Sigmoid colon (tissue), 7 donors: ENCODE measurements at regions of chr3 and their contacts with region 1.

Region 1: GRCh38 chr3:112531358-112531781 is 30.4 kb downstream of the ATG3 start:
- DNase-seq: no peak
- H3K4me3 ChIP-seq: no peak overlapping the region
- H3K27ac ChIP-seq: no peak overlapping the region
- H3K4me1 ChIP-seq: no peaks in the 10 kb centered on the region
- H3K27me3 ChIP-seq: no peaks in the 10 kb centered on the region
- CTCF ChIP-seq: peak in 3 of 4 experiments; percentile 18 to 54 (median 53)
- EP300 ChIP-seq: no peak
- POLR2A ChIP-seq: no peak

Region 2: DNA sequence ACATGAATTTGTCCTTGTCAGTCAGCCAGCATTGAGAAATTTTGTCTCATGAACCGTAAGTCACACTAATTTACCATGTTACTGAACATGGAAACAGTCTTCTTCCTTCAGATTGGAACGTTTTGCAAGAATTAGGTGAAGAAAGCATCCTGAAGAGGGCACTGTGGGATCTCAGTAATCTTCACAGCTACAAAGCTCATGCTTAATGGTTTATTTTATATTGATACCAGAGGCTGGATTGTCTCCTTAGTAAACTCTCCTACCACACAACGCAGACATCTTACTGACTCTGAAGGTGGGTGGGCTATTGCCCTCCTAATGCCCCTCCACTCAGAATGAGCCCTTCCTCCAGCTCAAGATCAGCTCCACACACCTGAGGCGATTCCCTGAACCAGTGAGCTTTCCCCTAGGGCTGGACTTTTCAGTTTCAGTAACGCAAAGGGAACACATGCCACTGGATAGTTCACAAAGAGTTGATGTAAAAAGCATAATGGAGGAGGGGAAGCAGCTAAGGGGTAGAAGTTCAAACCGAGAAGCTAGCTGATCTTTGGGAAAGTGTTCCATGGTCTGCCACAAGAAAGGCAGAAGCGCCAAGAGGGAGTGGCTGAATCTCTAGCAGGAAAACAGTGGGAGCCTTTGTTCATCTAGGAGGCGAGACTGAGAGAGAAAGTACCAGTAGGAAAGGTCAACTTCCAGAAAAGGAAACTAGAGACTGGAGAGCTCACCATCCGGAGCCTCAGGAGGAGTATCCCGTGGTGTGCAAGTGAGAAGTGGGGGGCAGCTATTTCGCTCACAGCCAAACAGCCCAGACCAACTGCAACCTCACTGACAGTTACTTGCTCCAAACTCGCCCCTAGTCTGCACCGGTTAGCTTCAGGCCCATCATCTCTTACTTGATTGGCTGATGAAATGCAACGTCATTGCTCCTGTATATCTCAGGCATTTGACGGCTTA is 237.7 kb before region 1 on chr3 and contains the start of gene SLC9C1:
- intact Hi-C with region 1: loop called (anchors 5 kb)
- DNase-seq: no peak
- H3K4me3 ChIP-seq: peak within 1 kb of the TSS; percentile 5 to 48 (median 40)
- H3K27ac ChIP-seq: peak within 1 kb of the TSS; percentile 56 to 74 (median 68)
- H3K4me1 ChIP-seq: no peaks in the 10 kb centered on the region
- H3K27me3 ChIP-seq: no peaks in the 10 kb centered on the region
- CTCF ChIP-seq: peak in 3 of 4 experiments; percentile 47 to 57 (median 51)
- EP300 ChIP-seq: no peak
- POLR2A ChIP-seq: no peak
- total RNA-seq, gene SLC9C1: 0.41 TPM in 1 of 4 donors, not detected in the others

Region 3: GRCh38 chr3:112482675-112483074 is 48.7 kb before region 1 on chr3:
- intact Hi-C with region 1: no loop called
- DNase-seq: no peak
- H3K4me3 ChIP-seq: no peak overlapping the region
- H3K27ac ChIP-seq: no peak overlapping the region
- H3K4me1 ChIP-seq: no peaks in the 10 kb centered on the region
- H3K27me3 ChIP-seq: no peaks in the 10 kb centered on the region
- CTCF ChIP-seq: no peak
- EP300 ChIP-seq: no peak
- POLR2A ChIP-seq: no peak